Caco-2 (cell line): ENCODE measurements at regions of chr2 and their contacts with region 1.

Region 1: GRCh38 chr2:41869542-41870264 is 178.1 kb upstream of the PKDCC start:
- DNase-seq: peak; percentile 81 to 87
- H3K4me3 ChIP-seq: no peak overlapping the region
- H3K4me3 Mint-ChIP-seq: no peak overlapping the region
- H3K27ac Mint-ChIP-seq: peak overlapping the region; percentile 68
- H3K4me1 ChIP-seq: peaks cover 71% of the 10 kb centered on the region
- H3K4me1 Mint-ChIP-seq: peaks cover 71% of the 10 kb centered on the region
- H3K27me3 ChIP-seq: no peaks in the 10 kb centered on the region
- H3K27me3 Mint-ChIP-seq: no peaks in the 10 kb centered on the region
- CTCF ChIP-seq: peak; percentile 85 to 96

Region 2: GRCh38 chr2:41400088-41400665 is 469.5 kb before region 1 on chr2:
- CTCF ChIA-PET with region 1: no interaction called
- POLR2A ChIA-PET with region 1: no interaction called
- intact Hi-C with region 1: no loop called
- DNase-seq: peak in 1 of 2 experiments; percentile 29
- H3K4me3 ChIP-seq: no peak overlapping the region
- H3K4me3 Mint-ChIP-seq: no peak overlapping the region
- H3K27ac Mint-ChIP-seq: no peak overlapping the region
- H3K4me1 ChIP-seq: no peaks in the 10 kb centered on the region; the same call in 1 of the 2 replicates
- H3K4me1 Mint-ChIP-seq: no peaks in the 10 kb centered on the region
- H3K27me3 ChIP-seq: no peaks in the 10 kb centered on the region
- H3K27me3 Mint-ChIP-seq: peaks cover 11% of the 10 kb centered on the region
- CTCF ChIP-seq: peak; percentile 22 to 34

Region 3: DNA sequence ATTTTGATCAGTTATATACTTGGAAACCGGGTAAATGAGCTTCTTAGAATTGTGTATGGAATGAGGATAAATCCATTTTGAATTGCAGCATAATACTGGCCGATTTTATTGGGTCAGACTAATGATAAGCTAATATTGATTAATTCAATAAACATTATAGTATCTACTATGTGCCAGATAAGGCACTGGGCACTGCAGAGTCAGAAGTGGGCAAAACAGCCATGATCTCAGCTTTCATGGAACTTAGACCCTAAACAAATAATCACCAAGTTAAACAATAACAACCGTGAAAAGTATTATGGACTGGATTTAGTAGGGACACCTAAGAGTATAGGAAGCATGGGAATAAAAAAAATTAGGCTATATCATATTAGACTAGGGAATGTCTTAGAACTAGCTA is 118.9 kb before region 1 on chr2:
- CTCF ChIA-PET with region 1: no interaction called
- POLR2A ChIA-PET with region 1: no interaction called
- intact Hi-C with region 1: no loop called
- DNase-seq: no peak
- H3K4me3 ChIP-seq: no peak overlapping the region
- H3K4me3 Mint-ChIP-seq: no peak overlapping the region
- H3K27ac Mint-ChIP-seq: no peak overlapping the region
- H3K4me1 ChIP-seq: no peaks in the 10 kb centered on the region
- H3K4me1 Mint-ChIP-seq: no peaks in the 10 kb centered on the region
- H3K27me3 ChIP-seq: no peaks in the 10 kb centered on the region
- H3K27me3 Mint-ChIP-seq: peaks cover 4% of the 10 kb centered on the region
- CTCF ChIP-seq: no peak

Region 4: GRCh38 chr2:41791523-41791922 is 78.2 kb before region 1 on chr2:
- CTCF ChIA-PET with region 1: no interaction called
- POLR2A ChIA-PET with region 1: no interaction called
- intact Hi-C with region 1: no loop called
- DNase-seq: peak in 1 of 2 experiments; percentile 59
- H3K4me3 ChIP-seq: no peak overlapping the region
- H3K4me3 Mint-ChIP-seq: no peak overlapping the region
- H3K27ac Mint-ChIP-seq: no peak overlapping the region
- H3K4me1 ChIP-seq: no peaks in the 10 kb centered on the region
- H3K4me1 Mint-ChIP-seq: no peaks in the 10 kb centered on the region
- H3K27me3 ChIP-seq: no peaks in the 10 kb centered on the region
- H3K27me3 Mint-ChIP-seq: peaks cover 11% of the 10 kb centered on the region
- CTCF ChIP-seq: no peak

Region 5: GRCh38 chr2:41847744-41848441 is 21.8 kb before region 1 on chr2:
- CTCF ChIA-PET with region 1: interaction called, 24 read pairs
- POLR2A ChIA-PET with region 1: no interaction called
- intact Hi-C with region 1: loop called (anchors 1 kb)
- DNase-seq: peak in 1 of 2 experiments; percentile 65
- H3K4me3 ChIP-seq: no peak overlapping the region
- H3K4me3 Mint-ChIP-seq: no peak overlapping the region
- H3K27ac Mint-ChIP-seq: no peak overlapping the region
- H3K4me1 ChIP-seq: peaks cover 9% of the 10 kb centered on the region
- H3K4me1 Mint-ChIP-seq: peaks cover 15% of the 10 kb centered on the region
- H3K27me3 ChIP-seq: no peaks in the 10 kb centered on the region
- H3K27me3 Mint-ChIP-seq: no peaks in the 10 kb centered on the region
- CTCF ChIP-seq: no peak

Region 6: GRCh38 chr2:41894563-41895333 is 25.0 kb after region 1 on chr2:
- CTCF ChIA-PET with region 1: interaction called, 6 read pairs
- POLR2A ChIA-PET with region 1: no interaction called
- intact Hi-C with region 1: loop called (anchors 1 kb)
- DNase-seq: peak; percentile 86 to 88
- H3K4me3 ChIP-seq: no peak overlapping the region
- H3K4me3 Mint-ChIP-seq: no peak overlapping the region
- H3K27ac Mint-ChIP-seq: peak overlapping the region; percentile 56
- H3K4me1 ChIP-seq: peaks cover 39% of the 10 kb centered on the region
- H3K4me1 Mint-ChIP-seq: peaks cover 39% of the 10 kb centered on the region
- H3K27me3 ChIP-seq: no peaks in the 10 kb centered on the region
- H3K27me3 Mint-ChIP-seq: no peaks in the 10 kb centered on the region
- CTCF ChIP-seq: no peak

Region 7: GRCh38 chr2:41955316-41956043 is 85.8 kb after region 1 on chr2:
- CTCF ChIA-PET with region 1: no interaction called
- POLR2A ChIA-PET with region 1: no interaction called
- intact Hi-C with region 1: no loop called
- DNase-seq: no peak
- H3K4me3 ChIP-seq: no peak overlapping the region
- H3K4me3 Mint-ChIP-seq: no peak overlapping the region
- H3K27ac Mint-ChIP-seq: peak overlapping the region; percentile 2
- H3K4me1 ChIP-seq: peaks cover 7% of the 10 kb centered on the region
- H3K4me1 Mint-ChIP-seq: peaks cover 18% of the 10 kb centered on the region
- H3K27me3 ChIP-seq: no peaks in the 10 kb centered on the region
- H3K27me3 Mint-ChIP-seq: no peaks in the 10 kb centered on the region
- CTCF ChIP-seq: no peak

Region 8: DNA sequence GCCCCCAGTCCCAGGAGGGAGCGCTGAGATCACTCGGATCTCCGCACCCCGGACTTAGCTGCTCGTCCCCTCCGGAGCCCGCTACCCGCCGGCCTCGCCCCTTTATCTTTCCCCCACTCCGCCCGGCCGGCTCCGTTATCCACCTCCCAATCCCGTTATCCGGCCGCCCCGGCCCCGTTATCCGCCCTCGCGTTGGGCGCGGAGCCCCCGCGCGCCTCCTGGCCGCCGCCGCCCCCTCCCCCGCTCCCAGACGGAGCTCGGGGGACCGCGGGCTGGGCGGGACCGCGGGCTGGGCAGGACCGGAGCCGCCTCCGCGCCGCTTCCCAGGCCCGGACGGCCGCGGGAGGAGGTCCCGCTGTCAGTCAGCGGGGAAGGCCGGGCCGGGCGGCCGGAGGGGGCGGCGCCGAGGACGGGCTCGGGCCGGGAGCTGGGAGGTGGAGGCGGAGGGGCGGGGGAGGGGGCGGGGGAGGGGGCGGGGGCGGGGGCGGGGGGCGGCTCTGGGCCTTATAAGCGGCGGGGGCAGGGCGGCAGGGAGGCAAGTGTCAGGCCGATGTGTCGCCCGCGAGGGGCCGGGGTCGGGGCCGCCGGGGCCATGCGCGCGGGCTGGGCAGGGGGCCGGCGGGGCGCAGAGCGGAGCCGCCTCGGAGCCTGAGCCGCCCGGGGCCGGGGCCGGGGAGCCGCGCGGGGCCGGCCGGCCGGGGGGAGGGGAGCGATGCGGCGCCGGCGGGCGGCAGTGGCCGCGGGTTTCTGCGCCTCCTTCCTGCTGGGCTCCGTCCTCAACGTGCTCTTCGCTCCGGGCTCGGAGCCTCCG is 178.0 kb after region 1 on chr2 and contains the start of gene PKDCC:
- CTCF ChIA-PET with region 1: interaction called, 44 read pairs
- POLR2A ChIA-PET with region 1: interaction called, 11 read pairs
- intact Hi-C with region 1: no loop called
- DNase-seq: peak; percentile 84 to 92
- H3K4me3 ChIP-seq: peak within 1 kb of the TSS; percentile 65
- H3K4me3 Mint-ChIP-seq: peak within 1 kb of the TSS; percentile 98
- H3K27ac Mint-ChIP-seq: peak within 1 kb of the TSS; percentile 98
- H3K4me1 ChIP-seq: peaks cover 39% of the 10 kb centered on the region
- H3K4me1 Mint-ChIP-seq: peaks cover 13% of the 10 kb centered on the region
- H3K27me3 ChIP-seq: no peaks in the 10 kb centered on the region
- H3K27me3 Mint-ChIP-seq: no peaks in the 10 kb centered on the region
- CTCF ChIP-seq: no peak
- total RNA-seq, gene PKDCC: 322 and 339 TPM in 2 replicates

Region 9: GRCh38 chr2:42063431-42064171 is 193.9 kb after region 1 on chr2:
- CTCF ChIA-PET with region 1: interaction called, 10 read pairs
- POLR2A ChIA-PET with region 1: no interaction called
- intact Hi-C with region 1: loop called (anchors 1 kb)
- DNase-seq: peak; percentile 85 to 89
- H3K4me3 ChIP-seq: peak overlapping the region; percentile 19; the same call in 1 of the 2 replicates
- H3K4me3 Mint-ChIP-seq: peak overlapping the region; percentile 54
- H3K27ac Mint-ChIP-seq: peak overlapping the region; percentile 96
- H3K4me1 ChIP-seq: peaks cover 79% of the 10 kb centered on the region
- H3K4me1 Mint-ChIP-seq: peaks cover 57% of the 10 kb centered on the region
- H3K27me3 ChIP-seq: no peaks in the 10 kb centered on the region
- H3K27me3 Mint-ChIP-seq: no peaks in the 10 kb centered on the region
- CTCF ChIP-seq: no peak

Region 10: GRCh38 chr2:42095923-42096408 is 226.3 kb after region 1 on chr2:
- CTCF ChIA-PET with region 1: interaction called, 17 read pairs
- POLR2A ChIA-PET with region 1: interaction called, 3 read pairs
- intact Hi-C with region 1: loop called (anchors 2 kb)
- DNase-seq: peak; percentile 74
- H3K4me3 ChIP-seq: no peak overlapping the region
- H3K4me3 Mint-ChIP-seq: no peak overlapping the region
- H3K27ac Mint-ChIP-seq: no peak overlapping the region
- H3K4me1 ChIP-seq: peaks cover 36% of the 10 kb centered on the region
- H3K4me1 Mint-ChIP-seq: peaks cover 43% of the 10 kb centered on the region
- H3K27me3 ChIP-seq: no peaks in the 10 kb centered on the region
- H3K27me3 Mint-ChIP-seq: no peaks in the 10 kb centered on the region
- CTCF ChIP-seq: peak; percentile 77 to 91

Region 11: DNA sequence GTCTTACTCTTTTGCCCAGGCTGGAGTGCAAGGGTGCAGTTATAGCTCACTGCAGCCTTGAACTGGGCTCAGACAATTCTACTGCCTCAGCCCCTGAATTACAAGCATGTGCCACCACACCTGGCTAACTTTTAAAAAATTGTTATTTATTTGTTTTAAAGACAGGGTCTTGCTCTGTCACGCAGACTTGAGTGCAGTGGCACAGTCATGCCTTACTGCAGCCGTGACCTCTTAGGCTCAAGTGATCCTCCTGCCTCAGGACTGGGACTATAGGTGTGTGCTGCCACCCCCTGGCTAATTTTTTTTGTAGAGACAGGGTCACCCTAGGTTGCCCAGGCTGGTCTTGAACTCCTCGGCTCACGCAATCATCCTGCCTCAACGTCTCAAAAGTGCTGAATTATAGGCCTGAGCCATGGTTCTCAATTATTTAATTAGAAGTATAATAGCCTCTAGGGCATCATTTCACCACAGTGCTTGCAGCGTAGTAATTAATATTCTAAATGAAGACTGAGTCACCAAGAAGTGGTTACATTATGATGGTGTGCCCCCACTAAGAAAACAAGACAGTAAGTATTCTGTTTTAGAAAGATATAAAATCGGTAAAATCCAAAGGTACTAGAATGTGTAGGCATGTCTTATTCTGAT is 369.1 kb after region 1 on chr2:
- CTCF ChIA-PET with region 1: interaction called, 3 read pairs
- POLR2A ChIA-PET with region 1: no interaction called
- intact Hi-C with region 1: loop called (anchors 5 kb)
- DNase-seq: peak; percentile 75 to 78
- H3K4me3 ChIP-seq: no peak overlapping the region
- H3K4me3 Mint-ChIP-seq: no peak overlapping the region
- H3K27ac Mint-ChIP-seq: no peak overlapping the region
- H3K4me1 ChIP-seq: peaks cover 33% of the 10 kb centered on the region
- H3K4me1 Mint-ChIP-seq: peaks cover 49% of the 10 kb centered on the region
- H3K27me3 ChIP-seq: no peaks in the 10 kb centered on the region
- H3K27me3 Mint-ChIP-seq: no peaks in the 10 kb centered on the region
- CTCF ChIP-seq: peak; percentile 51 to 55